A549 (cell line): ENCODE measurements at regions of chr17 and their contacts with region 1.

Region 1: GRCh38 chr17:43940630-43941029 is 1.6 kb downstream of the PPY start:
- DNase-seq: peak; percentile 57 to 58
- ATAC-seq: peak; percentile 54 to 79
- H3K4me3 ChIP-seq: no peak overlapping the region
- H3K27ac ChIP-seq: no peak overlapping the region
- H3K4me1 ChIP-seq: peaks cover 9% of the 10 kb centered on the region; the same call in 2 of the 3 replicates
- CTCF ChIP-seq: peak; percentile 37
- EP300 ChIP-seq: no peak
- POLR2A ChIP-seq: no peak
- RAD21 ChIP-seq: peak; percentile 34 to 56; a peak in 3 of 5 replicates

Region 2: GRCh38 chr17:43878260-43879175 is 62.1 kb before region 1 on chr17:
- CTCF ChIA-PET with region 1: interaction called, 144 read pairs
- POLR2A ChIA-PET with region 1: no interaction called
- DNase-seq: peak; percentile 87 to 98
- ATAC-seq: peak; percentile 83 to 94
- H3K4me3 ChIP-seq: no peak overlapping the region
- H3K27ac ChIP-seq: peak overlapping the region; percentile 33 to 54; a peak in 4 of 6 replicates
- H3K4me1 ChIP-seq: peaks cover 5% of the 10 kb centered on the region
- CTCF ChIP-seq: peak; percentile 96
- EP300 ChIP-seq: no peak
- POLR2A ChIP-seq: no peak
- RAD21 ChIP-seq: peak; percentile 85 to 88

Region 3: DNA sequence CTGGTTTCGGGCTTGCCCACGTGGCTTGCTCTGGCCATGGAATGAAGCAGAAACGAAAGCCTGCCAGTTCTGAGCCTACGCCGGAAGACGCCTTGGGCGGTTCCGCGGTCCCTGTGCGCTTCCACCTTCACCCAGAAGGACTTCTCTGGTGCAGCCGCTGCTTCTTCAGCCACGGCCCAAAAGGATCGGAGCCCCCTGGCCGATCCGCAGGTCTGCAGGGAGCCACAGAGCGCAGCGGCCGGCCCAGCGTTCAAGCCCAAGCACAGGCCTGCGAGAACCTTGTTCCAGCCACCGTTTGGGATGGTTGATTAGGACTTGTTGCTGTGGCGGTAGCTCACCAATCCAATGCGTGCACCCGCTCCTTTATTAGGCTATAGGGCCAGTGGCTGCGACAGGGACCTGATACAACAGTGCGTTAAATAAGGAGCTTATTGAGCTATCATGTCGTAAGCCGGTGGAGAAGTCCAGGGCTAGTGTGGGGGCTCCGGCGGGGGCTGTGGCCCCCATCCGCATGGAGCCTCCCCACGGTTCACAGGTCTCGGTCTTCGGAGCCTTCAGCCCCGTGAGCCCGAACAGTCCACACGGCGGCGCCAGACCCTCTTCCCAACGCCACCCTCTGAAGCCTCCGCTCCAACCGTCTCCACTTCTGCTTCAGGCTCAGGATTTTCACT is 23.1 kb before region 1 on chr17:
- CTCF ChIA-PET with region 1: interaction called, 215 read pairs
- POLR2A ChIA-PET with region 1: interaction called, 3 read pairs
- DNase-seq: peak in 1 of 2 experiments; percentile 43
- ATAC-seq: peak; percentile 66 to 89; a peak in 3 of 6 replicates
- H3K4me3 ChIP-seq: no peak overlapping the region
- H3K27ac ChIP-seq: no peak overlapping the region
- H3K4me1 ChIP-seq: no peaks in the 10 kb centered on the region
- CTCF ChIP-seq: peak; percentile 25; the same call in 1 of the 3 replicates
- EP300 ChIP-seq: no peak
- POLR2A ChIP-seq: no peak
- RAD21 ChIP-seq: peak in 1 of 2 experiments; percentile 54; a peak in 3 of 5 replicates

Region 4: DNA sequence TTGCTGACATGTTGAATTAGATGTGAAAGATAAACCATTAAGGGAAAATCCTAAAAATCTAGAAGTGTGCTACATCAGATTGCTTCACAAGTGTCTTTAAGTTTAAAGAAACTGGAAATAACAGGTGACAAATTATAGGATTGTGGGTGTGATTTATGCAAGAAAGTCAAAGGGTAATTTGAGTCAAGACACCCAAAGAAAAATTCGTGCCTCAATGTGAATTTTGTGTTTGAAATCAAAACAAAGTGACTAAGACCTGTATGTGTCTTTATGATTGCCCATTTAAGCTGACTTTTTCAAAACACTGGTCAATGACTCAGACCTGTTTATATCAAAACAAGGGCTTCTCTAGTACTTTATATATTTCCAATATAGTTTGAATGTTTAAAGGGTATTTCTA is 18.3 kb after region 1 on chr17:
- CTCF ChIA-PET with region 1: interaction called, 87 read pairs
- POLR2A ChIA-PET with region 1: no interaction called
- DNase-seq: no peak
- ATAC-seq: no peak
- H3K4me3 ChIP-seq: no peak overlapping the region
- H3K27ac ChIP-seq: no peak overlapping the region
- H3K4me1 ChIP-seq: no peaks in the 10 kb centered on the region
- CTCF ChIP-seq: no peak
- EP300 ChIP-seq: no peak
- POLR2A ChIP-seq: no peak
- RAD21 ChIP-seq: no peak

Region 5: GRCh38 chr17:44029736-44030135 is 89.1 kb after region 1 on chr17:
- CTCF ChIA-PET with region 1: interaction called, 24 read pairs
- POLR2A ChIA-PET with region 1: no interaction called
- DNase-seq: no peak
- ATAC-seq: no peak; a peak in 1 of 6 replicates
- H3K4me3 ChIP-seq: no peak overlapping the region
- H3K27ac ChIP-seq: no peak overlapping the region
- H3K4me1 ChIP-seq: no peaks in the 10 kb centered on the region
- CTCF ChIP-seq: no peak
- EP300 ChIP-seq: no peak
- POLR2A ChIP-seq: no peak
- RAD21 ChIP-seq: no peak

Region 6: GRCh38 chr17:44077595-44077909 is 136.9 kb after region 1 on chr17:
- CTCF ChIA-PET with region 1: no interaction called
- POLR2A ChIA-PET with region 1: no interaction called
- DNase-seq: no peak
- ATAC-seq: no peak
- H3K4me3 ChIP-seq: no peak overlapping the region
- H3K27ac ChIP-seq: no peak overlapping the region
- H3K4me1 ChIP-seq: no peaks in the 10 kb centered on the region
- CTCF ChIP-seq: no peak
- EP300 ChIP-seq: no peak
- POLR2A ChIP-seq: no peak
- RAD21 ChIP-seq: no peak

Region 7: GRCh38 chr17:44170499-44171201 is 230.0 kb after region 1 on chr17 and contains the start of gene ASB16:
- CTCF ChIA-PET with region 1: interaction called, 16 read pairs
- POLR2A ChIA-PET with region 1: no interaction called
- DNase-seq: no peak
- ATAC-seq: peak; percentile 9 to 11; a peak in 4 of 6 replicates
- H3K4me3 ChIP-seq: no peak within 1 kb of the TSS
- H3K27ac ChIP-seq: peak within 1 kb of the TSS in 1 of 2 experiments; percentile 1; a peak in 2 of 6 replicates
- H3K4me1 ChIP-seq: peaks cover 16% of the 10 kb centered on the region
- CTCF ChIP-seq: no peak
- EP300 ChIP-seq: no peak
- POLR2A ChIP-seq: no peak
- RAD21 ChIP-seq: no peak
- polyA plus RNA-seq, gene ASB16: 0.05 TPM in 1 of 2 replicates, not detected in the other